Left cardiac atrium (tissue), 4 donors: ENCODE measurements at regions of chr11 and their contacts with region 1.

Region 1: GRCh38 chr11:97033178-97033577 is 643.4 kb downstream of the JRKL start:
- DNase-seq: no peak
- ATAC-seq: no peak

Region 2: DNA sequence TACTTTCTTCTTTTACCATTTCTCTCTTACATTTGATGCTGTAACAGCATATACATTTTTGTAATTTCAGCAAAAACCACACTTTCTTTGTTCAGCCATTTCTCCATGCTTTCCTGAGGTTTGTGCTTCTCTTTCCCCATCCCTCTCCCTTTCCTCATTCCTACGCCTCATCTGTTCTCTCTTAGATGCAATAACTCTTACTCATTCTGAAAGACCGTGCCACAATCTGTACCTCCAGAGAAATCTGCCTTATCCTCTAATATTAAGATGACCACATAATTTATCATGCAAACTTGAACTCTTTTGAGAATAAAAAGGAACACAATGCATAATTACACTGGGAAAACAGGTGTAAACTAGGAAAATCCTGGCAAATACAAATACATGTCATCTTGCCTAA is 54.4 kb before region 1 on chr11:
- intact Hi-C with region 1: loop called in 1 of 2 experiments (anchors 10 kb)
- DNase-seq: no peak
- ATAC-seq: no peak

Region 3: DNA sequence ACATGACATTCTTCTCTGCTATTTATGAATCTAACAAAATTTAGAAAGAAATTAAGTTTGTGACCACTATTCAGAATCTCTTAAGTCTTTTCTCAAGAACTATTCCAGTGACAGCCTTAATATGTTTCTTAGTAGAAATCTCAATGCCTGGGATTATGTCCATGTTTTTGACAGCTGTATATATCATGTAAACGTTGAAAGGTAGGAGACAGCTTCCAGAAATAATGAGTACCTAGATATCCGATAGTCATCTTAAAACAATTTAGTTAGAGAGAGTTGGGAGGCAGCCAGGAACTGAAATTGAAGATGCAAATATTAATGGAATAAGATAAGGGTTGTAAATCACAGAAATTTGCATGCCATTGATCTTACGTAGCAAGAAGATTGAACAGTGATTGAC is 311.8 kb after region 1 on chr11:
- intact Hi-C with region 1: no loop called
- DNase-seq: no peak
- ATAC-seq: no peak